ENCODE measurements at regions of chr4 and their contacts with region 1.

Region 1: DNA sequence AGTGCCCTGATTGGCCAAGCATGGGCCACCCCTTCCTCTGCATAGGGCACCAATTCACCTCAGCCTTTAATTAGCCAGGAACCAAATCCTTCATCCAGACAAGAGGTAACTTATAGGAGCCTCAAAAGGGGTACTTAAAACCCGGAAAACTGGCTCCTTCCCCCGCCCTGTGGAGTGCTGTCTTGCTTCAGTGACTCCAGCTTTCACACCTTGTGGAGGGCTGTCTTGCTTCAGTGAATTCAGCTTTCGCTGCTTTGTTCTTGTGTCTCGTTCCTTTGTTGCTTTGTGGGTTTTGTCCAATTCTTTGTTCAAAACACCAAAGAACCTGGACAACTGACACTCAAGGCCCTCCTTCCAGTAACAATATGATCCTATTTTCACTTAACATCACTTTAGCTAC is 82.2 kb upstream of the FRG1 start:
- DNase-seq: no peak
- H3K4me3 Mint-ChIP-seq: no peak overlapping the region
- H3K27ac Mint-ChIP-seq: no peak overlapping the region
- H3K4me1 Mint-ChIP-seq: no peaks in the 10 kb centered on the region
- H3K27me3 Mint-ChIP-seq: no peaks in the 10 kb centered on the region

Region 2: DNA sequence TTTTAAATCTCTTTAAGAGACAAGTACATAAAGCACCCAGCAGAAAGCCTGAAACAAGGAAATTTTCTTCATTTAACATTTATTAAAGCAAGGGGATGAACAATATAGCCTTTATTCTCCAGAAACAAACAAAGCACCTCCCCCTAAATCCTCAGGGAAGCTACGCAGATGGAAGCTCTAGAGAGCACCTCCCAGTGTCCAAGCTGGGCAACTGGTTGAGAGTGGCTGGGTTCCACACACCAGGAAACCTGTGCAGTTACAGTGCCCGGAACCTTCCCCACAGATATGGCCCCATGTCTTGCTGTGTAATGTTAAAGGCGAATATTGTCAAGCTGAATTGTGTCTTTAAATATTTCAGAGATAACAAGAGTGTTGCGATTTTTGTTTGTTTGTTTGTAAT is 1728.1 kb before region 1 on chr4:
- CTCF ChIA-PET with region 1: no interaction called
- POLR2A ChIA-PET with region 1: interaction called, 12 read pairs
- DNase-seq: no peak
- H3K4me3 Mint-ChIP-seq: no peak overlapping the region
- H3K27ac Mint-ChIP-seq: no peak overlapping the region
- H3K4me1 Mint-ChIP-seq: no peaks in the 10 kb centered on the region
- H3K27me3 Mint-ChIP-seq: no peaks in the 10 kb centered on the region